ENCODE measurements at regions of chr3 and their contacts with region 1.

Region 1: GRCh38 chr3:148943506-148944205 is 47.7 kb upstream of the GYG1 start:
- DNase-seq: peak; percentile 85
- ATAC-seq: peak; percentile 89
- H3K4me3 ChIP-seq: no peak overlapping the region
- H3K27ac ChIP-seq: no peak overlapping the region
- H3K4me1 ChIP-seq: peaks cover 3% of the 10 kb centered on the region; the same call in 1 of the 2 replicates
- H3K27me3 ChIP-seq: peaks cover 2% of the 10 kb centered on the region
- CTCF ChIP-seq: peak; percentile 78
- POLR2A ChIP-seq: no peak
- RAD21 ChIP-seq: peak; percentile 70

Region 2: DNA sequence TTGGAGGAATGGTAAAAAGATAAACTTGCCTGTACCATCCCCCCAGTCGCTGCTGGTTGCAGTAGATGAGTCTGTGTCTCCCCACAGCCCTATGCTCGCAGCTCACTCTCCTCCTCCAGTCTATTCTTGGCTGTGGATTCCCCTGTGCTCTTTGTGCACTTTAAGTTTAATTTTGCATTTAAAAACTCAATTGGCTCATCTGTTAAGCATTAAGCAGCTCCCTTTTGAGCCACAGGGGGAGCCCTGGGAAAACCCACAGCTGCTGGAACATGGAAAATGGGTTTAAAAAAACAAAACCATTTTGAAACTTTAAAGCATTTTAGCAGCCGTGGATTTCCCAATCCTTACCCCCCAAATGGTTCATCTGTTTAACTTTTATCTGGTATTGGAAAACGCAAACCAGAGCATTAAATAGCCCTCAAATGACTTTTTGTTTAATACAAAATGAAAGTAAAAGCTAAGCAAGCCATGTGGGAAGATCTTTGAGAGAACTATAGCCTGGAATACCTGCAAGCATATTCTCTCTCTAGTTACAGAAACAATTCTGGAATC is 997.6 kb before region 1 on chr3:
- CTCF ChIA-PET with region 1: no interaction called
- POLR2A ChIA-PET with region 1: no interaction called
- dilution Hi-C with region 1: no loop called
- in situ Hi-C with region 1: loop called (anchors 25 kb)
- intact Hi-C with region 1: no loop called
- DNase-seq: peak; percentile 95
- ATAC-seq: peak; percentile 91
- H3K4me3 ChIP-seq: peak overlapping the region; percentile 50; the same call in 1 of the 2 replicates
- H3K27ac ChIP-seq: peak overlapping the region; percentile 84; the same call in 1 of the 2 replicates
- H3K4me1 ChIP-seq: peaks cover 11% of the 10 kb centered on the region
- H3K27me3 ChIP-seq: no peaks in the 10 kb centered on the region
- CTCF ChIP-seq: peak; percentile 86
- POLR2A ChIP-seq: no peak
- RAD21 ChIP-seq: peak; percentile 54

Region 3: DNA sequence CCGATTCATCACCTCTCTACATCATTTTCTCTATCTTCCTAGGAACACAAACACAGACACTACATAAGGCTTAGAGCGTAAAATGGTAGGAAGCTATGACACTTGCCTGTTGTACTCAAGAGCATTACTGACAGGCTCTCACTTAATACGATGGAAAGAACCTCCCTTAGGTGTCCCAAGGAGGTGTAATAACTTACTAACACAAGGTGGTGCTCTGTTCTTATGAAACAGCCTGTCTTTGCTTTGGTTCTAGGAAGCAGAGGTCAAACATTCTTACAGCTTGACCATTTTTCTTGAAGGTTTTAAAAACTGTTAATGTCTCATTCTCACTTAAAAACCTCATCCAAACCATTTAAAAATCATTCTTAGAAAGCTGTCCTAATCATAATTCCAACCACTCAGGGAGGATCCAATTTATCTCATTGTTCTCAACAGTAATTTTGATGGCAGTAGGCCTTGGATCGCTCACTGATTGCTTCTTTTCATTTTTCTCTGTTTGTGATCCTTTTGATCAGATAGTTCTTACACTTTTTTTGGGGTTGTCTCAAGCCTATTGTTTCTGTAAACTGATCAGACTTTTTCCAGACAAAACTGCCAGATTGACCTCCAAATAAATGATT is 563.8 kb before region 1 on chr3:
- CTCF ChIA-PET with region 1: interaction called, 6 read pairs
- POLR2A ChIA-PET with region 1: no interaction called
- dilution Hi-C with region 1: no loop called
- in situ Hi-C with region 1: loop called (anchors 5 kb)
- intact Hi-C with region 1: loop called (anchors 2 kb)
- DNase-seq: peak; percentile 69
- ATAC-seq: peak; percentile 91
- H3K4me3 ChIP-seq: no peak overlapping the region
- H3K27ac ChIP-seq: no peak overlapping the region
- H3K4me1 ChIP-seq: no peaks in the 10 kb centered on the region
- H3K27me3 ChIP-seq: no peaks in the 10 kb centered on the region
- CTCF ChIP-seq: peak; percentile 63
- POLR2A ChIP-seq: no peak
- RAD21 ChIP-seq: peak; percentile 77

Region 4: GRCh38 chr3:148459931-148460513 is 483.6 kb before region 1 on chr3:
- CTCF ChIA-PET with region 1: no interaction called
- POLR2A ChIA-PET with region 1: no interaction called
- dilution Hi-C with region 1: no loop called
- in situ Hi-C with region 1: no loop called
- intact Hi-C with region 1: loop called (anchors 5 kb)
- DNase-seq: peak; percentile 23
- ATAC-seq: no peak
- H3K4me3 ChIP-seq: no peak overlapping the region
- H3K27ac ChIP-seq: no peak overlapping the region
- H3K4me1 ChIP-seq: no peaks in the 10 kb centered on the region
- H3K27me3 ChIP-seq: no peaks in the 10 kb centered on the region
- CTCF ChIP-seq: peak; percentile 46
- POLR2A ChIP-seq: no peak
- RAD21 ChIP-seq: peak; percentile 61

Region 5: DNA sequence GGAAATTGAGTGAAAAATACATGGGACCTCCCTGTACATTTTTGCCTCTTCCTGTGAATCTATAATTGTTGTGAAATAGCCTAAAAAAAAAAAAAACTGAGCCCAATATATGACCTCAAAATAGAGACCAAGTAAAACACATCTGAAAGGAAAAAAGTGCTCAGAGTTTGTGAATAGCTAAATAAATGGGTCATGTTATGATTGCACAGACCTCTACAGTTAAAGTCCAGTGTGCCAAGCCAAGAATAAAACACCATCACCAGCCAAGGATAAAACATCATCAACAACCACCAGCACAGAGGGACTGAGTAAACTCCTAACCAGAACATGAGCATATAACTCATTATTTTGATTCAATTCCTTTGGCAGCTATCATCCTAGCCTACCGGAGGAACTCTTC is 361.5 kb before region 1 on chr3:
- CTCF ChIA-PET with region 1: no interaction called
- POLR2A ChIA-PET with region 1: no interaction called
- dilution Hi-C with region 1: no loop called
- in situ Hi-C with region 1: no loop called
- intact Hi-C with region 1: no loop called
- DNase-seq: no peak
- ATAC-seq: no peak
- H3K4me3 ChIP-seq: no peak overlapping the region
- H3K27ac ChIP-seq: no peak overlapping the region
- H3K4me1 ChIP-seq: no peaks in the 10 kb centered on the region
- H3K27me3 ChIP-seq: no peaks in the 10 kb centered on the region
- CTCF ChIP-seq: no peak
- POLR2A ChIP-seq: no peak
- RAD21 ChIP-seq: no peak

Region 6: GRCh38 chr3:148727247-148727646 is 216.4 kb before region 1 on chr3:
- CTCF ChIA-PET with region 1: no interaction called
- POLR2A ChIA-PET with region 1: no interaction called
- dilution Hi-C with region 1: no loop called
- in situ Hi-C with region 1: loop called (anchors 10 kb)
- intact Hi-C with region 1: loop called (anchors 1 kb)
- DNase-seq: no peak
- ATAC-seq: no peak
- H3K4me3 ChIP-seq: no peak overlapping the region
- H3K27ac ChIP-seq: no peak overlapping the region
- H3K4me1 ChIP-seq: no peaks in the 10 kb centered on the region
- H3K27me3 ChIP-seq: peaks cover 5% of the 10 kb centered on the region; the same call in 1 of the 2 replicates
- CTCF ChIP-seq: 0 out of 2 replicates have a peak, but pooled peaks have one; percentile 22
- POLR2A ChIP-seq: no peak
- RAD21 ChIP-seq: peak; percentile 23; the same call in 1 of the 2 replicates

Region 7: DNA sequence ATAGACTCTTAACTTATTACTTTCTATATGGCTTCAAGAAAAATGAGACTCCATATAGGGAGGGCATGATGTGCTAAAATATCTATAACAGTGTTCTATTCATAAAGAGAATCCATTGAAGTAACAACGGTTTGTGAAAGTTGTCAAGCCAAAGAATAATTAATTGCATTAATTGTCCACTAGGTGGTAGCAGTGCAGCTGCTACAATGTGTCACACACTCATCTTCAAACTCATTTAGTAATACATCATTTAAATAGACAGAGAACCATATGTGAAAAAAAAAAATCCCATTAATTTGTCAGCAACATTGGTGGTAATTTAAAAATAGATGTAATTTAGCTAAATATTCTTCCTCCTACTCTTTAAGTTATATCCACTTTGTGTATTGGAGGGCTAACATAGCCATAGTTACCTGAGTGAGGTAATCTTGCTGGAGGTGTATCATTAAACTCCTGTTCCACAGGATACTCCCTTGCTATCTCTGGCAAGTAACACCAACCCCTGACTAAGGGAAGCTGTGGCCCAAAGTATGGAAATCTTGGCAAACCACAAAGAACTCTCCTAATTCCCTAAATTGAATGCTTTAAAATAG is 82.3 kb before region 1 on chr3:
- CTCF ChIA-PET with region 1: interaction called, 20 read pairs
- POLR2A ChIA-PET with region 1: no interaction called
- dilution Hi-C with region 1: no loop called
- in situ Hi-C with region 1: loop called (anchors 5 kb)
- intact Hi-C with region 1: loop called (anchors 1 kb)
- DNase-seq: peak; percentile 54
- ATAC-seq: peak; percentile 77
- H3K4me3 ChIP-seq: no peak overlapping the region
- H3K27ac ChIP-seq: no peak overlapping the region
- H3K4me1 ChIP-seq: no peaks in the 10 kb centered on the region
- H3K27me3 ChIP-seq: peaks cover 5% of the 10 kb centered on the region
- CTCF ChIP-seq: peak; percentile 69
- POLR2A ChIP-seq: no peak
- RAD21 ChIP-seq: peak; percentile 84

Region 8: DNA sequence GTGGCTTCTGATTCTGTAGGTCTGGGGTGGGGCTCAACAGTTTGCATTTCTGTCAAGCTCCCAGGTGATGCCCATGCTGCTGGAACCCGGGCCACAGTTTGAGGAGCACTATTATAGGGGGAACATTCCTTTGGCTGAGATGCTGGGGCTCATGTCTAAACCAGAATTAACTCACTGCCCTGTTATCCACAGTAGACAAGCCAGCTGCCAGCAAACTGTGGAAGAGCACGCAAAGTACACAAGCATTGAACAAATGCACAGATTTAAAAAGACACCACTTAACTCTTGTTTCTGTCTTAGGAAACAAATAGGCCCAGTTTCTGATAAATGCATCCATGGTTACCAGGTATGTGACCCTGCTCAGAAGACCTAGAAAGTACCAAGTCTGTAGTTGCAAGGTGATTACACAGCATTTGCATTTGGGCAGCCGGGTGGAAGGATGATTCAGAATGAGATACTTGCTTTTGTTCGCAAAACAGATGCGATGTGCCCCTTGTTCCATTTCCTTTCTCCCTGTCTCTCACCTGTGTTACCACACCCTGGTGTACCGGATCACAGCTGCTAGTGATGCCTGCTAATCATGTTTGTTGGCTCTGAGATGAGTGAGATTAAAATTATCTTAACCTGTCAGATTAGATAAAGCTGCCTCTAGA is 60.1 kb after region 1 on chr3:
- CTCF ChIA-PET with region 1: no interaction called
- POLR2A ChIA-PET with region 1: no interaction called
- dilution Hi-C with region 1: no loop called
- in situ Hi-C with region 1: no loop called
- intact Hi-C with region 1: no loop called
- DNase-seq: no peak
- ATAC-seq: no peak
- H3K4me3 ChIP-seq: no peak overlapping the region
- H3K27ac ChIP-seq: peak overlapping the region; percentile 26; the same call in 1 of the 2 replicates
- H3K4me1 ChIP-seq: peaks cover 13% of the 10 kb centered on the region
- H3K27me3 ChIP-seq: no peaks in the 10 kb centered on the region
- CTCF ChIP-seq: no peak
- POLR2A ChIP-seq: no peak
- RAD21 ChIP-seq: no peak

Measured in IMR-90 (cell line).